OCI-LY7 (cell line): ENCODE measurements at regions of chrX and their contacts with region 1.

Region 1: DNA sequence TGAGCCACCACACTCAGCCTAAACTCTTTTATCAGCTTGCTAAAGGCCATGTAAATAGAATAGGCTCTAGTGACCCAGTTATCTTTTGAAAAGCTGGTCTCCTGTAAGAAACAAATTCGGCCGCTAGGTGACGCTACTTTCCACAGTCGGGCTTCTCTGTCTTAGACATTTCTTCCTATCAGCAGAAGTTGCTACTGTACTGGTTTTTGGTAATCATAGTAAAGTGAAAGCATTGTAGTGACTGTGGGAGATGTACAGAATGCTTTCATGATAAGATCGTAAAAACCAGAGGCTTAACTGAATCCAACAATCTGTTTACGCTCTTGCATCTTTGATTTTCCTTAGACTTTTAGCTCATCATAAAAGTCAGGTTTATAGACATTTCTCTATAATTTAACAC is 82.6 kb downstream of the GK start:
- DNase-seq: peak; percentile 69
- H3K4me3 ChIP-seq: no peak overlapping the region
- H3K27ac ChIP-seq: no peak overlapping the region
- H3K4me1 ChIP-seq: no peaks in the 10 kb centered on the region
- CTCF ChIP-seq: peak; percentile 84

Region 2: GRCh38 chrX:30822068-30822681 is 86.3 kb after region 1 on chrX:
- CTCF ChIA-PET with region 1: interaction called, 3 read pairs
- POLR2A ChIA-PET with region 1: no interaction called
- intact Hi-C with region 1: loop called (anchors 5 kb)
- DNase-seq: peak; percentile 51
- H3K4me3 ChIP-seq: no peak overlapping the region
- H3K27ac ChIP-seq: peak overlapping the region; percentile 43
- H3K4me1 ChIP-seq: peaks cover 22% of the 10 kb centered on the region
- CTCF ChIP-seq: peak; percentile 51

Region 3: DNA sequence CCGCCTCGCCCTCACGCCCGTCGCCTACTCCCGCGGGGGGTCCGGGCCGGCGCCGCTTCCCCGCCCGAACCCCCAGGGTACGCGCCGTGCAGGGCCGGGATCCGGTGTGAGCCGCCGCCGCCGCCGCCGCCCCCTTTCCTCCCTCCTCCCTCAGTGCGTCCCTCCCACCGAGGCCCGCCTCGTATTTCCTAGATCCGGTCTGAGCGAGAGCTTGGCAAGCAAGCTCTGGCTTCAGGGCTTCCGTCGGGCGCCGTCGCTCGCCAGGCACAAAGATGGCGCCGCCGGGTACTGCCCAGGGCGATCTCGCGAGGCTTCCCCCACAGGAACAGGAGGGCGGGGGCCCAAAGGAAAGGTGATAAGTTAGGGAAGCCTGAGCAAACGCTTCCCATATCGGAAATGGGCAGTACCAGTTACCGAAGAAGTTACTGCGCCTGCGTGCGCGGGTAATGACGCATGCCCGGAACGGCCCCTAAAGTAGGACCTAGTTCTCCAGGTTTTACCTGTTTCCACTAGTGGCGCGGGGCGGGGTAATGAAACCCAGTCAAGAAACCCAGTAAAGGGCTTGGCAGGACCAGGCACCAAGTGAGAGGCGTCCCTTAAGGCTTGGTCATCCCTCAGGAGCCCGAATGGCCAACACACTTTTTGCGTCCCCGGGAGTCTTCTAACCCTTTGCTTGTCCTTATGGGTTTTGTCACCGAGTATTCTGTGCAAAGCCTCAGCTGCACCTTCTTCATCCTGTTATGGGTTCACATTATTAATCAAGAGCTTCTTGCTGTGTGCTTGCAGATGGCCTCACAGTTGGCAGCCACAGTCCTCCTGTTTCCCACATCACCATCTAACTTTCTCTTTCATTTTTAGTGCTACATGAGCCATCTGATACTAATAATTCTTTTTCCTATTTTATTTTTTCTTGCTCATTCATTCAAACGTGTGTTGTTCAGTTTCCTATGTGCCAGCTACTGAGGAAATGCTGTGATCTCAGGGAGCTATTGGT is 153.6 kb after region 1 on chrX and contains the start of gene TAB3:
- CTCF ChIA-PET with region 1: no interaction called
- POLR2A ChIA-PET with region 1: no interaction called
- intact Hi-C with region 1: loop called (anchors 5 kb)
- DNase-seq: peak; percentile 96
- H3K4me3 ChIP-seq: peak within 1 kb of the TSS; percentile 95
- H3K27ac ChIP-seq: peak within 1 kb of the TSS; percentile 61
- H3K4me1 ChIP-seq: peaks cover 11% of the 10 kb centered on the region
- CTCF ChIP-seq: no peak
- total RNA-seq, gene TAB3: 10.3 and 13.8 TPM in 2 replicates

Region 4: DNA sequence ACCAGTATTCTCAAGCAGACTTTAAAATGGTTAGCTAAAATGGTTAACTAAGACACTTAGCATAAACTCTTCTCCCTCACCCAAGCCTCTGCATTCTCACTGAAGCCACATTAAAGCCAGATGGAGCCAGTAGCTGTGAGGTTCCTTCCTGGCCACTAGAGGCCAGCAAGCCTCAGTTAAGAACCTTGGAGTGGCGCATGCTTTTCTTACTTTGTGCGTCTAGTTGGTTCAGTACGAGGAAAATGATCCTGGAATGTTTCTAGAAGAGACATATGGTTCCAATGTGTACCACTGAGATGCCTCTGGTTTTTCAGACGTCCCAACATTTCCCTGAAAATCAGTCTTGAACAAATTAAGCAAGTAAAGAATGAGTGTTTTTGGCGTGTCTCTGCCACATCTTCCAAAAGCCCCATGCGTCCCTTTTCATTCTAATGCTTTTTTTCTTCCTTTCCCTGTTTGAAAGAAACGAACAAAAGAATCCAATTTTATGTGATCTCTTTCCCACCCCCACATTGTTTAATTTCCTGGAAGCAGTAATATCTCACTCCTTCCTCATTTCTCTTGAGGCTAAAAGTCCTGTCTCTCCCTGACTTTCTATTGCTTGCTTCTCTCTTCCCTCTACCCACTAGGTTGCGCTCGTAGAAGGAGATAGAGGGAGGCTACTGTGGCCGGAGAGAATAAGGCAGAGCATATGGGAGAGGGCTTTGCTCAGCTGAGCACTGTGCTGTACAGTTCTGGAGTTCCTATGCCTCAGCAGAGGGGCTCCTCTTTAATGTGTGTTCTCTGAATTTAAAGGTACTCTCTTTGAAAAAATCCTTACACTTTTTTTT is 236.2 kb after region 1 on chrX:
- CTCF ChIA-PET with region 1: no interaction called
- POLR2A ChIA-PET with region 1: no interaction called
- intact Hi-C with region 1: loop called (anchors 10 kb)
- DNase-seq: peak; percentile 54
- H3K4me3 ChIP-seq: peak overlapping the region; percentile 43
- H3K27ac ChIP-seq: no peak overlapping the region
- H3K4me1 ChIP-seq: no peaks in the 10 kb centered on the region
- CTCF ChIP-seq: peak; percentile 79